ENCODE measurements at regions of chr19 and their contacts with region 1.

Region 1: GRCh38 chr19:17215125-17215971 is at the start of gene USE1:
- DNase-seq: peak; percentile 81 to 92 (median 91)
- H3K4me3 ChIP-seq: peak within 1 kb of the TSS; percentile 59 to 94 (median 81)
- H3K27ac ChIP-seq: peak within 1 kb of the TSS; percentile 44 to 99 (median 94)
- H3K27me3 ChIP-seq: no peaks in the 10 kb centered on the region
- CTCF ChIP-seq: peak in 33 of 56 donors; percentile 8 to 59 (median 25)
- total RNA-seq, gene USE1: 27.0 to 54.1 (median 39.3) TPM

Region 2: DNA sequence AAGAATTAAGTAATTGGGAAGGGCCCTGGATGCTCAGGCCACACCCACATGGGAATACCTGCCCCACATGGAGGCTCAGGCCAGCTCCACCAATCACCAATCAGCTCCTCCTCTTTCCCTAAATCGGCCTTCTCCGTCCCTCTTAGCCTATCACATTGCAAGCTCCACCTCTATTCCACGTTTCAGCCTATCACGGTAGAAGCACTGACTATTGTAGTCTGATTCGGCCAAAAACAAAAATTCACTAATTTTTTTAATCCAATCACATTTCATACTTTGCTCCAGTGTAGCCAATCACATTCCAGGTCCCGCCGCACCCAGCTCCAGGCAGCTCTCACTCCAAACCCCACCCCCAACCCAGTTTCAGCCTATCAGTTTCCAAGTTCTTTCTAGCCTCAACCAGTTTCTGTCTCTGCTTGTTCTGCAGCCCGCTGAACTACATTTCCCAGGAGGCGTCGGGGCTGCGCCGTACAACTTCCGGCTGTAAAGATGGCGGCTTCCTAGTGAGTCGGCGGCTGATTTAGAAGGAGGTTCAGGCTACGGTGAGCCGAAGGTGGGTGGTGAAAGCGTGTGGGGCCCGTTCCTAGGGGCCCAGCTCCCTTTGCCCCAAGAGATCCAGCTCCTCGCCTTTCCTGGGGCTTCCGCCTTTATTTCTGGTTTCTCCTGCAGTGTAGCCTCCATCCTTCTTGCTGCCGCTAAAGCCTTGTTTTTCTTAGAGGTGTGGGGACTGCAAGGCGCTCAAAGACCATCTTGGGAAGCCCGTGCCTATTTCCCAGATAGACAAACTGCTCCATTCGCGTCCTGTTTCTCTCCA is 51.8 kb after region 1 on chr19 and contains the start of gene BABAM1:
- intact Hi-C with region 1: loop called in 1 of 2 experiments (anchors 5 kb)
- DNase-seq: peak; percentile 94 to 99 (median 96)
- H3K4me3 ChIP-seq: peak within 1 kb of the TSS; percentile 54 to 99 (median 86)
- H3K27ac ChIP-seq: peak within 1 kb of the TSS in 58 of 59 donors; percentile 22 to 93 (median 78)
- H3K27me3 ChIP-seq: no peaks in the 10 kb centered on the region
- CTCF ChIP-seq: peak in 17 of 56 donors; percentile 7 to 51 (median 19)
- total RNA-seq, gene BABAM1: 78.2 to 165 (median 122) TPM

Measured in dorsolateral prefrontal cortex (tissue), 120 donors.